ENCODE measurements at regions of chr3 and their contacts with region 1.

Region 1: GRCh38 chr3:186826976-186827731 is 15.4 kb upstream of the ADIPOQ start:
- DNase-seq: peak in 1 of 2 donors; percentile 88
- H3K4me3 ChIP-seq: peak overlapping the region; percentile 62 to 86
- H3K27ac ChIP-seq: peak overlapping the region; percentile 57 to 62
- H3K4me1 ChIP-seq: peaks cover 3 to 5% of the 10 kb centered on the region in 2 donors
- H3K27me3 ChIP-seq: peaks cover 7% of the 10 kb centered on the region
- CTCF ChIP-seq: no peak

Region 2: DNA sequence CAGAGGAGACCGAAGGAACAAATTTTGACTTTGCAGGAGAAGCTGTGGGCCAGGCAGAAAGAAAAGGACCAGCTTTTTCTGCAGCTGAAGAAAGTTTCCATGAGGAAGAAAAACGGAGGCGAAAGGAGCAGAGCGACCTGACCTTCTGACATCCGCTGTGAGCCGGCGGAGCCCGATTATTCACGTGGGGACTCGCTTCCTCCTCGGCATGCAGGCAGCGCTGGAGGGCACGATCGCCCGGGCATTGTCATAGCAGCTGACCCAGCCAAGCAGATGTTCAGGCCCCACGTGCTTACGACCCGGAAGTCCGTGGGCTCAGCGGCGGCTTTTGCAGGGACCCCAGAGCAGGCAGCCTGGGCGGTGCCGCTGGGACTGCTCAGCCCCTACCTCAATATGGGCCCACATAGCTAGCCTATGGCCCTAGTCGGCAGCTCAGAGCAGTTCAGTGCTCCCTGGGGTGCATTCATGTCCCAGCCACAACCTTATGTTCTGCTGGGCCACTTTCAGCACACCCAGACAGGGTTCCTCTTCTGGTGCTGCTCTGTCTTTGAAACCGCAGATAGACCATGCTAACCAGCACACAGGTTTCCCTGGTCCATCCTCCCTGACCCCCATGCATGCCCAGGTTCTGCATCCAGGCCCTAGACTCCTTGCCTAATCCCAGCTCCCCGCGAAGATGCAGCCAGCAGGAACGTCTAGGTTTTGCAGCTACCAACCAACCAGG is 54.3 kb before region 1 on chr3:
- intact Hi-C with region 1: no loop called
- DNase-seq: peak; percentile 57 to 82
- H3K4me3 ChIP-seq: peak overlapping the region; percentile 51 to 83
- H3K27ac ChIP-seq: peak overlapping the region in 1 of 2 donors; percentile 60
- H3K4me1 ChIP-seq: no peaks in the 10 kb centered on the region
- H3K27me3 ChIP-seq: no peaks in the 10 kb centered on the region
- CTCF ChIP-seq: no peak

Region 3: DNA sequence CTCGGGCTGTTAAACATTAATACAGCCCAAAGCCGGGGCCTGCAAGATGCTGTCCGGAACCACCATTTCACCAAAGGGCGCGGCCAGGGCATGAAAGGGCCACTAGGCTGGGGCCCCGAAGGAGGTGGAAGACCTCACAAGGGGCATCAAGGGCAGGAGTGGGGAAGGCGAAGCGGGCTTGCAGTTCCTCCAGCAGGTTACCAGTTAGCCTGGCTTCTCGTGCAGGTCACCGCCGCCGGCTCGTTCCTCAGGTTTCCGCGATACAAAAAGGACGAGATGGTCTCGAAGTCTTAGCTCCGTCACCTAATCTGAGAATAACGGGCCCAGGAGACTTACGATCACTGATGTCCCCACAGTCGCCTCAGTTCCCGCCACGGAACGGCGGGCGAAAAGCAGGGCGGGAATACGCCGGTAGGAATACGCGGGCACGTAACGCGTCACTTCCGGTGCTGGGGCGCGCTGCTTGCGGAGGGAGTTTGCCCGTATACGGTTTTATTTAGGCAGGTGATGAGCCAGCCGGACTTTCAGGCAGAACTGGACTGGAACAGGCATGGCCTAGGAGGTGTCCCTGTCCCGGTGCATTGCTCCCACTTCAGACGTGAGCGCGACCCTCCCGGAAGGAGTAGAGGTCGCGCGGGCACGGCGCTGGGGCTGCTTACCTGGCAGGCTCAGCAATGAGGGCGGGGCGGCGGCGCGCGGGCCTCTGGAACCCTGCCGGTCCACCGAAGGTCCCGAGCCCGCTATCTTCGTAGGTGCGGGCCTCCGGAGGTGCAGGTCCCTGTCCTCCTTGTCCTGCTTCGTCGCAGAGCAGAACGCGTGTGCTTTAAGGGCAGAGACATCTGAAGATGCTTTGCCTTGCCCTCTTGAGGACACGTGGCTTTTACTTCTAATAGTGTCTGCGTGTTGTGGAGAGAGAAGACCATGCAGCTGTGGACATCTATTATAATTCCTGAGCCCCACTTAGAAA is 20.8 kb before region 1 on chr3 and contains the start of gene RFC4:
- intact Hi-C with region 1: loop called (anchors 2 kb)
- DNase-seq: peak in 1 of 2 donors; percentile 92
- H3K4me3 ChIP-seq: peak within 1 kb of the TSS; percentile 76 to 83
- H3K27ac ChIP-seq: peak within 1 kb of the TSS; percentile 75 to 78
- H3K4me1 ChIP-seq: peaks cover 6 to 13% of the 10 kb centered on the region in 2 donors
- H3K27me3 ChIP-seq: no peaks in the 10 kb centered on the region
- CTCF ChIP-seq: no peak
- total RNA-seq, gene RFC4: 23.8 TPM

Measured in ascending aorta (tissue), 2 donors.